Ovary (tissue), 10 donors: ENCODE measurements at regions of chr13 and their contacts with region 1.

Region 1: GRCh38 chr13:23660249-23660648 is 90.0 kb downstream of the TNFRSF19 start:
- DNase-seq: no peak
- H3K4me3 ChIP-seq: no peak overlapping the region
- H3K27ac ChIP-seq: no peak overlapping the region
- H3K4me1 ChIP-seq: peaks cover 8% of the 10 kb centered on the region
- H3K27me3 ChIP-seq: no peaks in the 10 kb centered on the region
- CTCF ChIP-seq: no peak
- EP300 ChIP-seq: no peak
- POLR2A ChIP-seq: no peak

Region 2: GRCh38 chr13:23628765-23629565 is 31.3 kb before region 1 on chr13:
- intact Hi-C with region 1: loop called in 1 of 4 experiments (anchors 1 kb)
- DNase-seq: no peak
- H3K4me3 ChIP-seq: no peak overlapping the region
- H3K27ac ChIP-seq: peak overlapping the region in 1 of 2 donors; percentile 53
- H3K4me1 ChIP-seq: peaks cover 10% of the 10 kb centered on the region
- H3K27me3 ChIP-seq: no peaks in the 10 kb centered on the region
- CTCF ChIP-seq: no peak
- EP300 ChIP-seq: no peak
- POLR2A ChIP-seq: no peak